ENCODE measurements at regions of chr1 and their contacts with region 1.

Region 1: GRCh38 chr1:219385786-219386427 is 212.2 kb downstream of the LYPLAL1 start:
- DNase-seq: no peak
- ATAC-seq: peak; percentile 52
- H3K4me3 Mint-ChIP-seq: no peak overlapping the region
- H3K27ac Mint-ChIP-seq: no peak overlapping the region
- H3K4me1 Mint-ChIP-seq: no peaks in the 10 kb centered on the region
- H3K27me3 Mint-ChIP-seq: no peaks in the 10 kb centered on the region
- CTCF ChIP-seq: no peak

Region 2: GRCh38 chr1:218339267-218339831 is 1046.6 kb before region 1 on chr1:
- CTCF ChIA-PET with region 1: interaction called, 12 read pairs
- POLR2A ChIA-PET with region 1: no interaction called
- intact Hi-C with region 1: loop called (anchors 1 kb)
- DNase-seq: no peak
- ATAC-seq: peak; percentile 28
- H3K4me3 Mint-ChIP-seq: no peak overlapping the region
- H3K27ac Mint-ChIP-seq: no peak overlapping the region
- H3K4me1 Mint-ChIP-seq: no peaks in the 10 kb centered on the region
- H3K27me3 Mint-ChIP-seq: no peaks in the 10 kb centered on the region
- CTCF ChIP-seq: peak; percentile 51

Region 3: DNA sequence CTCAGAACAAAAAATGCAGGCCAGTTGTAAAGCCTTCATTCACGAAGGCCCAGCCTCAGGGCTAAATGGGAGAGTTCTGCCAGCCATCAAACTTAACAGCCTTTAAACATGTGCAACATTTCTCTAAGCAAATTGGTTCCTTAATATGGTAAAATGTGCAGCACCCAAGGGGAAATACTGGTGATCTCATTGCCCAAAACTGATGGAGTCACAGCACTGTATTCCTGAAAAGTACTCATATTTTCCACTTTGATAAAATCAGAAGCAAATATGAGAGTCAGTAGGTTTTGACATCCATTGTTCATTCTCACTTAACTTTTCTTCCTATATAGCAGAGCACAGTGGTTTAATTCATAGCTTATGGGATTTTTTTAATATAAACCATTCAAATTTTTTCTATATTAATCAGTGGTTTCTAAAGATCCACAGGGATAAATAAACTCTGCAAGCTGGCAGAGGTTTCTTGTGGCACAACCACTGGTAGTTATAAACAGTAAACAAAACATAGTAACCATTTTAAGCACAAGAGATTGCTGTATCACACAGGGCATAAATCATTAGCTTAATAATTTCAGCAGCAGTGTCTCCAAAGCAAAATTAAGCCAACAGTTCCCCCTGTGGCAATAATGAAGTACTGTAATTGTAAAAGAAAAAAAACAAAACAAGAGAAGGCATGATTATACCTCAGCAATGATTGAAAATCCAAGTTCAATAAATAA is 319.1 kb before region 1 on chr1:
- CTCF ChIA-PET with region 1: interaction called, 4 read pairs
- POLR2A ChIA-PET with region 1: no interaction called
- intact Hi-C with region 1: loop called (anchors 1 kb)
- DNase-seq: no peak
- ATAC-seq: no peak
- H3K4me3 Mint-ChIP-seq: no peak overlapping the region
- H3K27ac Mint-ChIP-seq: no peak overlapping the region
- H3K4me1 Mint-ChIP-seq: peaks cover 8% of the 10 kb centered on the region
- H3K27me3 Mint-ChIP-seq: no peaks in the 10 kb centered on the region
- CTCF ChIP-seq: no peak

Region 4: GRCh38 chr1:219209578-219209977 is 176.3 kb before region 1 on chr1:
- CTCF ChIA-PET with region 1: no interaction called
- POLR2A ChIA-PET with region 1: no interaction called
- intact Hi-C with region 1: loop called (anchors 1 kb)
- DNase-seq: no peak
- ATAC-seq: no peak
- H3K4me3 Mint-ChIP-seq: no peak overlapping the region
- H3K27ac Mint-ChIP-seq: no peak overlapping the region
- H3K4me1 Mint-ChIP-seq: no peaks in the 10 kb centered on the region
- H3K27me3 Mint-ChIP-seq: no peaks in the 10 kb centered on the region
- CTCF ChIP-seq: no peak

Region 5: DNA sequence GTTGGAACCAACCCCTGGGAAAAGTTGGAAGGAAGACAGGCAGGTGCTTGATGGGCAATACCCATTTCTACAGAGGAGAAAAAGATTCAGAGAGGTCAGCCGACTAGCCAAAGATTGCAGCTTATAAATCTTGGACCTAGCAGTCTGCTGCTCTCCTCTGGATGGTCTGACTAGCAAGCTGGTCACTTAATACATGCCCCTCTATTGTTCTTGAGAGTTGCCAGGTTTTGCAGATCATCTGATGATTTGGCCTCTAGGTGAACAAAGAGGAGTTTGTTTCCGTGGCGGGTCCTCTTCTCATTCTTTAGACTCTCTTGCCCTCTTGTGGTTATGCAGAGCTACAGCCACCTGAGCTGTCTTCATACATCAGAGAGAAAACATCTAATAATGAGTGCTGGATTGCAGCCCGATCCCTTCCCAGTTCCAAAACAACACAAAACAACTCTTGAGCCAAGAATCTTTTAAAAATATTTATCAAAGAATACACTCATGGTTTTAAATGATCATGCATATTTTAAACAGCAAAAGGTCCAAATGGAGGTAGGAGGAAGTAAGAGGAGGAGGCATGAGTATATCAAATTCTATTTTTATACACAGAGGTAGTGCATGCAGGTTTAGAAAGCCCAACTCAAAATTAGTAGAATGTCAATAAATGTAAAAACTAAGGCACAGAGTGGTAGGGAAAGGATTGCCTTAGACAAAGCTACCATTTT is 426.7 kb after region 1 on chr1:
- CTCF ChIA-PET with region 1: interaction called, 5 read pairs
- POLR2A ChIA-PET with region 1: no interaction called
- intact Hi-C with region 1: loop called (anchors 5 kb)
- DNase-seq: no peak
- ATAC-seq: peak; percentile 45
- H3K4me3 Mint-ChIP-seq: no peak overlapping the region
- H3K27ac Mint-ChIP-seq: no peak overlapping the region
- H3K4me1 Mint-ChIP-seq: no peaks in the 10 kb centered on the region
- H3K27me3 Mint-ChIP-seq: peaks cover 10% of the 10 kb centered on the region
- CTCF ChIP-seq: no peak

Region 6: GRCh38 chr1:220353229-220354012 is 967.5 kb after region 1 on chr1:
- CTCF ChIA-PET with region 1: no interaction called
- POLR2A ChIA-PET with region 1: no interaction called
- intact Hi-C with region 1: no loop called
- DNase-seq: no peak
- ATAC-seq: no peak
- H3K4me3 Mint-ChIP-seq: no peak overlapping the region
- H3K27ac Mint-ChIP-seq: no peak overlapping the region
- H3K4me1 Mint-ChIP-seq: no peaks in the 10 kb centered on the region
- H3K27me3 Mint-ChIP-seq: peaks cover 3% of the 10 kb centered on the region
- CTCF ChIP-seq: no peak

Measured in activated B cell treated with CpG ODN at 0.5 μM for 24 hours (primary cell).